ENCODE measurements at regions of chr6 and their contacts with region 1.

Region 1: GRCh38 chr6:127737009-127737486 is 160.1 kb downstream of the C6orf58 start:
- DNase-seq: peak; percentile 71
- ATAC-seq: peak; percentile 87
- H3K4me3 ChIP-seq: no peak overlapping the region
- H3K27ac ChIP-seq: no peak overlapping the region
- H3K4me1 ChIP-seq: no peaks in the 10 kb centered on the region
- H3K27me3 ChIP-seq: peaks cover 14% of the 10 kb centered on the region; the same call in 1 of the 2 replicates
- CTCF ChIP-seq: peak; percentile 75

Region 2: GRCh38 chr6:127971945-127972391 is 234.9 kb after region 1 on chr6:
- CTCF ChIA-PET with region 1: no interaction called
- POLR2A ChIA-PET with region 1: no interaction called
- intact Hi-C with region 1: loop called (anchors 2 kb)
- DNase-seq: peak; percentile 89
- ATAC-seq: peak; percentile 94
- H3K4me3 ChIP-seq: peak overlapping the region; percentile 45; the same call in 1 of the 2 replicates
- H3K27ac ChIP-seq: peak overlapping the region; percentile 85
- H3K4me1 ChIP-seq: peaks cover 18% of the 10 kb centered on the region
- H3K27me3 ChIP-seq: no peaks in the 10 kb centered on the region
- CTCF ChIP-seq: no peak

Region 3: GRCh38 chr6:128731249-128732165 is 994.5 kb after region 1 on chr6:
- CTCF ChIA-PET with region 1: no interaction called
- POLR2A ChIA-PET with region 1: no interaction called
- intact Hi-C with region 1: loop called (anchors 2 kb)
- DNase-seq: peak; percentile 65
- ATAC-seq: peak; percentile 74
- H3K4me3 ChIP-seq: no peak overlapping the region
- H3K27ac ChIP-seq: no peak overlapping the region
- H3K4me1 ChIP-seq: no peaks in the 10 kb centered on the region
- H3K27me3 ChIP-seq: no peaks in the 10 kb centered on the region
- CTCF ChIP-seq: peak; percentile 77

Measured in PC-3 (cell line).